ENCODE measurements at regions of chr20 and their contacts with region 1.

Region 1: GRCh38 chr20:44326391-44327159 is 10.3 kb upstream of the R3HDML start:
- DNase-seq: no peak
- H3K4me3 ChIP-seq: peak overlapping the region in 1 of 2 donors; percentile 11
- H3K27ac ChIP-seq: no peak overlapping the region
- H3K4me1 ChIP-seq: no peaks in the 10 kb centered on the region
- H3K27me3 ChIP-seq: no peaks in the 10 kb centered on the region
- CTCF ChIP-seq: no peak
- POLR2A ChIP-seq: no peak

Region 2: GRCh38 chr20:44576297-44576696 is 249.7 kb after region 1 on chr20:
- intact Hi-C with region 1: loop called (anchors 10 kb)
- DNase-seq: no peak
- H3K4me3 ChIP-seq: no peak overlapping the region
- H3K27ac ChIP-seq: peak overlapping the region; percentile 24 to 97
- H3K4me1 ChIP-seq: peaks cover 7 to 9% of the 10 kb centered on the region in 2 donors
- H3K27me3 ChIP-seq: no peaks in the 10 kb centered on the region
- CTCF ChIP-seq: peak in 3 of 4 experiments; percentile 18 to 32 (median 20)
- POLR2A ChIP-seq: no peak